MCF 10A (cell line): ENCODE measurements at regions of chr4 and their contacts with region 1.

Region 1: GRCh38 chr4:164779811-164780216 is 25.9 kb downstream of the SMIM31 start:
- DNase-seq: peak; percentile 64
- H3K4me3 Mint-ChIP-seq: no peak overlapping the region
- H3K27ac Mint-ChIP-seq: no peak overlapping the region
- H3K4me1 Mint-ChIP-seq: no peaks in the 10 kb centered on the region
- H3K27me3 Mint-ChIP-seq: no peaks in the 10 kb centered on the region
- CTCF ChIP-seq: peak; percentile 86

Region 2: DNA sequence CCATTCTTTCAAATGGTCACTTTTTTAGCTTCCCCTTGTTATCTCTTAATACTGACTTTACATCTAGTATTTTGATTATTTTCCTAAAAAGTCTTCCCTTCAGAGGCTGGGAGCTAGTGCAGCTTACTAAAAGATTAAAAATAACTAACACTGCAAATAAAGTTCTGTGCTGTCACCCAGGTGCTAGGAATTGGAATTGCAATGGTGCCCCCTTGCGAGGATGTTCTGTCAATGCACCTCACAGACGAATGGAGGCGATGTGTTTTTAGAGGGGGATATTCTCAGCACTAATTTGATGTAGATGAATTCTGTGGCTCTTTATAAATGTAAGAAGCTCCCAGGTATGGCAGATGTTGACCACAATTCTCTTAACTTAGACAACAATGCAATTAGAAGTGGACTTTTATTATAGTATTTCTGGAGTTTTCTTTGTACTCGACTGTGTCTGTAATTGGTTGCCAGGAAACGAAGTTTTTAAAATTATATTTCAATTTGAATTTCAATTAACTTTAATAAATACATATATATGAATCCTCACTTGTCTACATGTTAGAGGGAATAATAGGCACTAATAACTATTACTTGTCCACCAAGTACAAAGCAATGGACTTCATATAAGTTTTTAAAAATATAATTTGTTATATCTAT is 47.9 kb before region 1 on chr4:
- CTCF ChIA-PET with region 1: no interaction called
- POLR2A ChIA-PET with region 1: no interaction called
- intact Hi-C with region 1: no loop called
- DNase-seq: peak; percentile 71
- H3K4me3 Mint-ChIP-seq: no peak overlapping the region
- H3K27ac Mint-ChIP-seq: no peak overlapping the region
- H3K4me1 Mint-ChIP-seq: no peaks in the 10 kb centered on the region
- H3K27me3 Mint-ChIP-seq: no peaks in the 10 kb centered on the region
- CTCF ChIP-seq: peak; percentile 88

Region 3: GRCh38 chr4:164937576-164938270 is 157.9 kb after region 1 on chr4:
- CTCF ChIA-PET with region 1: interaction called, 11 read pairs
- POLR2A ChIA-PET with region 1: no interaction called
- intact Hi-C with region 1: no loop called
- DNase-seq: peak; percentile 54
- H3K4me3 Mint-ChIP-seq: no peak overlapping the region
- H3K27ac Mint-ChIP-seq: no peak overlapping the region
- H3K4me1 Mint-ChIP-seq: no peaks in the 10 kb centered on the region
- H3K27me3 Mint-ChIP-seq: no peaks in the 10 kb centered on the region
- CTCF ChIP-seq: peak; percentile 18

Region 4: GRCh38 chr4:164949448-164950143 is 169.8 kb after region 1 on chr4:
- CTCF ChIA-PET with region 1: interaction called, 44 read pairs
- POLR2A ChIA-PET with region 1: interaction called, 4 read pairs
- intact Hi-C with region 1: no loop called
- DNase-seq: no peak
- H3K4me3 Mint-ChIP-seq: no peak overlapping the region
- H3K27ac Mint-ChIP-seq: no peak overlapping the region
- H3K4me1 Mint-ChIP-seq: no peaks in the 10 kb centered on the region
- H3K27me3 Mint-ChIP-seq: no peaks in the 10 kb centered on the region
- CTCF ChIP-seq: peak; percentile 32

Region 5: GRCh38 chr4:164997324-164997723 is 217.5 kb after region 1 on chr4:
- CTCF ChIA-PET with region 1: interaction called, 36 read pairs
- POLR2A ChIA-PET with region 1: no interaction called
- intact Hi-C with region 1: loop called (anchors 1 kb)
- DNase-seq: peak; percentile 70
- H3K4me3 Mint-ChIP-seq: no peak overlapping the region
- H3K27ac Mint-ChIP-seq: no peak overlapping the region
- H3K4me1 Mint-ChIP-seq: no peaks in the 10 kb centered on the region
- H3K27me3 Mint-ChIP-seq: no peaks in the 10 kb centered on the region
- CTCF ChIP-seq: peak; percentile 44

Region 6: GRCh38 chr4:165096776-165097175 is 317.0 kb after region 1 on chr4:
- CTCF ChIA-PET with region 1: interaction called, 10 read pairs
- POLR2A ChIA-PET with region 1: no interaction called
- intact Hi-C with region 1: loop called (anchors 2 kb)
- DNase-seq: peak; percentile 17
- H3K4me3 Mint-ChIP-seq: no peak overlapping the region
- H3K27ac Mint-ChIP-seq: no peak overlapping the region
- H3K4me1 Mint-ChIP-seq: no peaks in the 10 kb centered on the region
- H3K27me3 Mint-ChIP-seq: no peaks in the 10 kb centered on the region
- CTCF ChIP-seq: peak; percentile 39

Region 7: DNA sequence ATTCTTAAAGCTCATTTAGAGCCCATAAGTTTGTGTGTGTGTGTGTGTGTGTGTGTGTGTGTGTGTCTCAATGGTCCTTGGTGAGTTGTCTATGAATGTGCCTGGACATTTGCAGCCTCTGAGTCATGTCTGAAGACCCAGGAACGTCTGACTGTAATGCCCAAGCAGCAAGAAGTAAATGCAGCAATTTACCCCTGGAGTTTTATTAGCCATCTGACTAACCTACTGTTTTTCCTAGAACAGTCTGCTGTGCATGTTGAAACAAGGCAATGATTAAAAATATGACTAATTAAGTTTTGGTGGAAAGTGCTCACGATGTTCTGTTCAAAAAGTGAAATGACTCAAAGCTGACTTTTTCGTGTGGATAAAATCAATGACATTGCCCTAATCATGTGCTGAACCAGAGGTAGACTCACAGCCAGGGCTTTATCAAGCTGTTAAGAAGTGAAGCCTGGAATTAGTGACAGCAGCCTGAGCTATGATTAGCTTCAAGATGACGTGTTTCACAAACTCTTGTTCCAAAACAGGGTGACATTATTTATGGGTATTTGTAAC is 800.6 kb after region 1 on chr4:
- CTCF ChIA-PET with region 1: no interaction called
- POLR2A ChIA-PET with region 1: no interaction called
- intact Hi-C with region 1: no loop called
- DNase-seq: peak; percentile 92
- H3K4me3 Mint-ChIP-seq: peak overlapping the region; percentile 38
- H3K27ac Mint-ChIP-seq: peak overlapping the region; percentile 13
- H3K4me1 Mint-ChIP-seq: peaks cover 47% of the 10 kb centered on the region
- H3K27me3 Mint-ChIP-seq: no peaks in the 10 kb centered on the region
- CTCF ChIP-seq: no peak